ENCODE measurements at regions of chr15 and their contacts with region 1.

Region 1: GRCh38 chr15:53569751-53570480 is 189.5 kb downstream of the WDR72 start:
- DNase-seq: peak; percentile 8
- H3K4me3 ChIP-seq: no peak overlapping the region
- H3K27ac ChIP-seq: no peak overlapping the region
- H3K4me1 ChIP-seq: no peaks in the 10 kb centered on the region
- H3K27me3 ChIP-seq: no peaks in the 10 kb centered on the region
- CTCF ChIP-seq: no peak
- POLR2A ChIP-seq: no peak

Region 2: DNA sequence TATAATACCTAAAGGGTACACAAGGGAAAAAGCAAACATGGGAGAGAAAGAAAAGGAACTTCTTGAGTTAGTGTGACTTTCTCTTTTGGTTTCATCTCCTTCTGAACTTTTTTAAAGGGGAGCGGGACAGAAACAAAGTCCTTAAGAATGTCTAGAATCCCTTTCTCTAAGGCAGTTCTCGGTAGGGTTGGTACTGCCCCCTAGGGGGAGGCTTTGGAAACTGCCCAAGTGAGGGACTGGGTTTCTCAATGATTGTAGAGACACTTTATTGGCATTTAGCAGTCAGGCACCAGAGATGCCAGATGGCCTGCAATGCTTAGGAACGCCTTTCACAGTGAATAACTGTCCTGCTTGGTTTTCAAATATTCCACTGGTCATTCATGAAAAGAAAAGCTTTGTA is 16.9 kb after region 1 on chr15:
- CTCF ChIA-PET with region 1: no interaction called
- POLR2A ChIA-PET with region 1: no interaction called
- dilution Hi-C with region 1: no loop called
- intact Hi-C with region 1: loop called (anchors 2 kb)
- DNase-seq: peak; percentile 35
- H3K4me3 ChIP-seq: no peak overlapping the region
- H3K27ac ChIP-seq: no peak overlapping the region
- H3K4me1 ChIP-seq: no peaks in the 10 kb centered on the region
- H3K27me3 ChIP-seq: no peaks in the 10 kb centered on the region
- CTCF ChIP-seq: peak; percentile 35 to 54
- POLR2A ChIP-seq: no peak

Region 3: GRCh38 chr15:53611145-53611920 is 41.4 kb after region 1 on chr15:
- CTCF ChIA-PET with region 1: no interaction called
- POLR2A ChIA-PET with region 1: no interaction called
- dilution Hi-C with region 1: no loop called
- intact Hi-C with region 1: loop called (anchors 5 kb)
- DNase-seq: peak; percentile 97
- H3K4me3 ChIP-seq: no peak overlapping the region
- H3K27ac ChIP-seq: peak overlapping the region; percentile 85
- H3K4me1 ChIP-seq: peaks cover 18% of the 10 kb centered on the region
- H3K27me3 ChIP-seq: no peaks in the 10 kb centered on the region
- CTCF ChIP-seq: peak; percentile 16
- POLR2A ChIP-seq: peak; percentile 49